Calu3 (cell line): ENCODE measurements at regions of chr12 and their contacts with region 1.

Region 1: GRCh38 chr12:117671734-117672133 is 297.1 kb downstream of the KSR2 start:
- DNase-seq: peak; percentile 72
- H3K4me3 Mint-ChIP-seq: no peak overlapping the region
- H3K27ac Mint-ChIP-seq: no peak overlapping the region
- H3K4me1 Mint-ChIP-seq: no peaks in the 10 kb centered on the region
- H3K27me3 Mint-ChIP-seq: peaks cover 88% of the 10 kb centered on the region
- CTCF ChIP-seq: peak; percentile 59

Region 2: DNA sequence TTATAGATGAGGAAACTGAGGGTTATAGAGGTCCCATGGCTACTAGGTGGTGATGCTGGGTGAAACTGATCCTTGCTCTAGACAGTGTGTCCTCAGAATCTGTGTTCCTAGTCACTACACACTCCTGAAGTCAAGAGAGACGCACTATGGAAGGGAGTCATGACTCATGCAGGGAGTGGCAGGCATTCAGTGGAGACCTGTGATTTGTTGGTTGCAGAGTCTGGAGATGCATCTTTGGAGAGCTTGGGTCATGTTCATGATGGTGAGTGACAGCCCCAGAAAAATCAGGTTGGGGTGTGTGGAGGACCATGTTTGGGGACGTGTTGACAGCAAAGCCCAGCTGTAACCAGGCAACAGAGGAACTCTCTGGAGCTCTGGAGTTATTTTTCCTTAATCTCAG is 443.5 kb before region 1 on chr12:
- CTCF ChIA-PET with region 1: no interaction called
- intact Hi-C with region 1: no loop called
- DNase-seq: no peak
- H3K4me3 Mint-ChIP-seq: no peak overlapping the region
- H3K27ac Mint-ChIP-seq: no peak overlapping the region
- H3K4me1 Mint-ChIP-seq: no peaks in the 10 kb centered on the region
- H3K27me3 Mint-ChIP-seq: peaks cover 86% of the 10 kb centered on the region
- CTCF ChIP-seq: no peak

Region 3: GRCh38 chr12:117774941-117775775 is 103.4 kb after region 1 on chr12:
- CTCF ChIA-PET with region 1: no interaction called
- intact Hi-C with region 1: no loop called
- DNase-seq: no peak
- H3K4me3 Mint-ChIP-seq: no peak overlapping the region
- H3K27ac Mint-ChIP-seq: no peak overlapping the region
- H3K4me1 Mint-ChIP-seq: no peaks in the 10 kb centered on the region
- H3K27me3 Mint-ChIP-seq: peaks cover 9% of the 10 kb centered on the region
- CTCF ChIP-seq: no peak

Region 4: DNA sequence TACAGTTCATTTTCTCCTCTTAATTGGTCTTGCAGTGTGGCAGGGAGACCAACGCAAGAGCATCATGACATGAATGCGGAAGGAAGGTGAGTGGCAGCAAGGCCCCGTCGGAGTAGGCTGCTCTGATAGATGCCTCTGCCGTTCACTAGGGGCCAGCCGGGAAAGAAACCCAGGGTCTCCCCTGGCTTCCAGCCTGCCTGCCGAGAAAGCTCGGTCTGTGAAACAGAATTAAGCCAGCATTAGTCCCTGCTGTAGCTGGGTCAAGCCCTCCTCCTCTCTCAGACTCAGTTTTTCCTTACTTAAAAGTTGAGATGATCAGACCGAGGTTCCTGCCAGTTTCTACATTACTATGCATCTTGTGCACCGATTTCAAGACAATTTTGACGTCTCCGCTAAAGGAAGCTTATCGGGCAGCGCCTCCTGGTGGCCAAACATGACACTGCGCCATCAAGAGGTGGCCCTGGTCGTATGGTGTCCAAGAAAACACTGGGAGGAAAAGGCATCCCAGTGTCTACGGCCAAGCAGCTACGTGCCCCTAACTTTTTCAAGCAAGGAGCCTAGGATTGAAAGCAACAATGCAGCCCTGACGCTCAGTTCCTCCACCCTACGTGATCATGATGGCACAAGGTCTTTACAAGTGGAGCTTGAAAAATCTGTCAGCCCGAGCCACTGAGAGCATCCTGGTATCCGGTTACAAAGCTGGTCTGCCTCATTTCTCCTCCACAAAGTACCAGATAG is 165.4 kb after region 1 on chr12:
- CTCF ChIA-PET with region 1: no interaction called
- intact Hi-C with region 1: loop called (anchors 5 kb)
- DNase-seq: peak; percentile 84
- H3K4me3 Mint-ChIP-seq: no peak overlapping the region
- H3K27ac Mint-ChIP-seq: no peak overlapping the region
- H3K4me1 Mint-ChIP-seq: peaks cover 7% of the 10 kb centered on the region
- H3K27me3 Mint-ChIP-seq: peaks cover 42% of the 10 kb centered on the region
- CTCF ChIP-seq: peak; percentile 96